H1 (cell line): ENCODE measurements at regions of chr11 and their contacts with region 1.

Region 1: GRCh38 chr11:111954154-111954553 is 17.0 kb downstream of the DIXDC1 start:
- DNase-seq: no peak
- H3K4me3 ChIP-seq: no peak overlapping the region
- H3K27ac ChIP-seq: no peak overlapping the region
- H3K4me1 ChIP-seq: no peaks in the 10 kb centered on the region
- H3K27me3 ChIP-seq: no peaks in the 10 kb centered on the region
- CTCF ChIP-seq: no peak
- EP300 ChIP-seq: no peak
- POLR2A ChIP-seq: no peak
- RAD21 ChIP-seq: no peak

Region 2: DNA sequence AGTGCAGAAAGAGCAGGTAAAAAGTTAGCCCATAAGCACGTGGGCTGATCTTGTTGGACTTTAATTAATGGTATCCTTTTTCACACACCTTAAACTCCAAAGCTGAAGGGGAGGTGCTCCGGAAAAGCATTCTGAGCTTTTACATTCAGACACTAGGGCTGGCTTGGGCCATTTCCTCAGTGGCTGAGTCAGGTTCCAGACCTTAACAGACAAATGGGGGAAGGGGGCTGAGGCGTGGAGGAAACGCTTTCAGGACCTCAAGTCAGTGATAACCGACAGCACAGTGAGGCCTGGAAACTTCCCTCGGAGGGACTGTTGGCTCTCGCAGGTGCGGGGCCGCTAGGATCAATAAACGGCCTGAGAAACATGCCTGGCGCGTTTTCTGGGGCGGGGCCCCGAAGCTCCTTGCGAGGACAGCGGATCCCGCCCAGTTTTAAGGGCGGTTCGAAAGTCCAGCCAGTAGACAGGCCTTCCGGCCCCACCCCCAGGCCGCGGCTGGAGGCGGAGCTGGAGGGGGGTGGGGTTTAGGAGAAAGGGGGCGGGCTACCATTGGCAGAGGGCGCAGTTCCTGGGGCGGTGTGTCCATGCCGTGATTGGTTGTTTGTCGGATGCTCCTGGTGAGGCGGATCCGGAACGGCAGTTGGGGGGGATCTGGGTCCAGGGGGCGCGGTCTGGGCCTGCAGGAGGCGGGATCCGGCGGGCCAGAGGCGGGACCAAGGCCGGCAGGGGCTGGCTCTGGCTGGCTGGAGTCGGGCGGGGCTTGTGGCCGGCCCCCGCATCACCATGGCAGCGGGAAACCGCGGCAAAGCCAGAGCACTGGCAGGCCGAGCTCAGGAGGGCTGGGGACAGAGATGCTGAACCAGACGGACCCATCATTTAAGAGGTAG is 27.4 kb before region 1 on chr11:
- CTCF ChIA-PET with region 1: interaction called, 12 read pairs
- POLR2A ChIA-PET with region 1: interaction called, 3 read pairs
- DNase-seq: peak; percentile 94 to 97
- H3K4me3 ChIP-seq: peak overlapping the region; percentile 47 to 70 (median 58); a peak in 7 of 8 replicates
- H3K27ac ChIP-seq: peak overlapping the region; percentile 75
- H3K4me1 ChIP-seq: peaks cover 0 to 10% (median 3%) of the 10 kb centered on the region in 4 experiments; a peak in 5 of 7 replicates
- H3K27me3 ChIP-seq: no peaks in the 10 kb centered on the region; a peak in 1 of 7 replicates
- CTCF ChIP-seq: peak in 1 of 3 experiments; percentile 2; a peak in 1 of 4 replicates
- EP300 ChIP-seq: no peak
- POLR2A ChIP-seq: peak; percentile 15 to 82
- RAD21 ChIP-seq: no peak